ENCODE measurements at regions of chr6 and their contacts with region 1.

Region 1: GRCh38 chr6:130885392-130886192 is 58.4 kb downstream of the SMLR1 start:
- DNase-seq: peak in 4 of 10 donors; percentile 59 to 91 (median 72)
- H3K4me3 ChIP-seq: peak overlapping the region in 1 of 59 donors; percentile 4
- H3K27ac ChIP-seq: peak overlapping the region in 46 of 59 donors; percentile 1 to 95 (median 38)
- H3K27me3 ChIP-seq: no peaks in the 10 kb centered on the region
- CTCF ChIP-seq: peak; percentile 81 to 99 (median 95)

Region 2: DNA sequence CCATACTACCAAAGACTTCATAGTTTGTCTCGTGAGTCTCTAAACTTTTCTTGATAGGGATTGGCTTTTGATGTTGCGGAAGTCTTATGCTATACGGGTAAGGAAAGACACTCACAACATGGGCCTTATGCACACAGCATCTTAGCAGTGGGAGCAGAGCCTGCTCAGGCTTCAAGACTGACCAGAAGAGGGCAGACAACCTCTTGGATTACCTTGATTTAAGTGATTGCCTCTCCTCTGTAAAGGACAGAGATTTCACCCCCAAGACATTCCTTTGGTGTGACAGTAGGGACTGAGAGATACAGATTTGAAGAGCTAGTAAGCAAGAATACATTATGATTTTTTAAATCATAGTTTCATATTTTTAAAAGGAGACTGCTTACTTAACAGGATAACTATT is 591.8 kb before region 1 on chr6:
- intact Hi-C with region 1: no loop called
- DNase-seq: peak in 1 of 10 donors; percentile 28
- H3K4me3 ChIP-seq: no peak overlapping the region
- H3K27ac ChIP-seq: no peak overlapping the region
- H3K27me3 ChIP-seq: peaks cover 0 to 5% (median 0%) of the 10 kb centered on the region in 45 donors
- CTCF ChIP-seq: peak in 43 of 56 donors; percentile 15 to 53 (median 34)

Region 3: DNA sequence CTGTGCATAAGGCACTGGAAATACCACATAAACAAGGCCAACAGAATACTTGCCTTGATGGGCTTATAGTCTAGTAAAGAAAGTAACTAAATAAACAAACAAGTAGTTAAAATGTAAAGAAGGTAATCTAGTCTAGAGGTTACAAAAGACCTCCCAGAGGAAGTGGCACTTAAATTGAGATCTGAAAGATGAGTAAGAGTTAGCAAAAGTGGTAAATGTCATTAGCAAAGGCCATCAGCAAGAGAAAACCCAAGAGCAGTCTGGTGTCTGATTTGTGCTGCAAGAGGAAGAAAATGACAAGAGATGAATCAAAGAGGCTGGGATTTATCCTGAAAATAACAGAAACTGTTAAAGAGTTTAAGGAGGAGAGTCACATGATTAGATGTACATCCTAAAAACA is 155.0 kb before region 1 on chr6:
- intact Hi-C with region 1: no loop called
- DNase-seq: no peak
- H3K4me3 ChIP-seq: no peak overlapping the region
- H3K27ac ChIP-seq: no peak overlapping the region
- H3K27me3 ChIP-seq: no peaks in the 10 kb centered on the region
- CTCF ChIP-seq: no peak

Region 4: GRCh38 chr6:130918171-130918570 is 32.6 kb after region 1 on chr6:
- intact Hi-C with region 1: no loop called
- DNase-seq: no peak
- H3K4me3 ChIP-seq: no peak overlapping the region
- H3K27ac ChIP-seq: no peak overlapping the region
- H3K27me3 ChIP-seq: no peaks in the 10 kb centered on the region
- CTCF ChIP-seq: no peak

Region 5: DNA sequence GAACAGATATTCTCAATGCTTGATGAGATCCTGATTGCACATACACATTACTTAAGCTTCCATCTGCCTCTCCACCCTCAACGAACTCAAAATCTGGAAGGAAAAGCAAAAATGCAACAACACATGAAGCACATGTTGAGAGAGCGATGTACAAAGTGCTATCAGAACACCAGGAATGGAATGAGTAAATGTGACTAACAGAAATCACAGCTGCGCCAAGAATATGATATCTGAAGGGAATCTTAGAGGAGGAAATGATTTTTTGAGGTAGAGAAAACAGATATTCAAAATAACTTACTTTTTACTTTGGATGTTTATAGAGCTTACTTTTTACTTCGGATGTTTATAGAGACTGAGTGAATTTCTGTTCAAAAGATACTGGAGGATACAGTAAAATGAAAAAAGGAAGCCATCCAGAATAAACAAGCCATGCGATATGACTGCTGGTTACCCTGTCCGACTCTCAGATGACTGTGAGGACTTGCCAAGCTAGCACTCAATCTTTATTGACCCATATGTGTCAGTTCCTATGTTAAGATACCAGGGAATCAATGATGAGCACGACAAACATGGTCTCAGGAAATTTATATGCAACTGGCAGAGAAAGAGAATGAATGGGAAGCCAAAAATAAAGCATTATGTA is 43.6 kb after region 1 on chr6:
- intact Hi-C with region 1: loop called in 1 of 2 experiments (anchors 5 kb)
- DNase-seq: no peak
- H3K4me3 ChIP-seq: peak overlapping the region in 3 of 59 donors; percentile 1 to 7 (median 4)
- H3K27ac ChIP-seq: peak overlapping the region in 56 of 59 donors; percentile 30 to 86 (median 70)
- H3K27me3 ChIP-seq: no peaks in the 10 kb centered on the region
- CTCF ChIP-seq: no peak

Region 6: DNA sequence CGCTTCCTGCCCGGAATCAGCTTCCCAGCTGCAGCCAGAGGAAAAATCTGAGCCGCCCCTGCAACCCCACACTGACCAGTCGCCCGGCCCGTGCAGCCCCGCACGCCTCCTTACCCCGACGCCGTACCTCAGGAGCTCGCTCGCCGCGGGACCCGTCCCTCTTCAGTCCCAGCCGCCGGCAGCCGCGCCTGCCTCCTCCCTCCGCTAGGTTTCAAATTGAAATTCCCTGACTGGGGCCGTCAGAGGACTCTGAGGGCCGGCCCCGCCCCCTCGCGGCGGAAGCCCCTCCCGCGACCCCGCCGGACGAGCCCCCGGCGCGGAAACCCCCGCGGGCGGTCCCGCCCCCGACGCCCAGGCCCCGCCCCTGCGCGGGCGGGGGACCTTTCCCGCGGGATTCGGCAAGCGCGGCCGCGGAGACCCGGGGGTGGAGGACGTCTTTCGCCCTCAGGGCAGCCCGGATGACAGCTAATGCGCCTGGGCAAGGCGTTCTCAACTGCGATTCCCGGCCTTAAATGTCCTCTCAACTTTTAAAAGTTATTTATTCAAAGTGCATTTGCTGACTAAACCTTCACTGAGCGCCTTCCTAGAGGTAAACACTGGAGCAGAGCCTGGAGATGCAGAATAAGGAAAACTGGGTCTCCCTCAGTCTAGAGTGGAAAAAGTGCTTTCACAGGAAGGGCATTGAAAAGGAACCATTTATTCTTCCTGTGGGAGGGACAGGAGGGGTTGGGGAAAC is 177.6 kb after region 1 on chr6 and contains the start of gene EPB41L2:
- intact Hi-C with region 1: loop called (anchors 2 kb)
- DNase-seq: peak; percentile 52 to 94 (median 82)
- H3K4me3 ChIP-seq: peak within 1 kb of the TSS; percentile 53 to 99 (median 92)
- H3K27ac ChIP-seq: peak within 1 kb of the TSS; percentile 69 to 96 (median 93)
- H3K27me3 ChIP-seq: no peaks in the 10 kb centered on the region
- CTCF ChIP-seq: peak in 35 of 56 donors; percentile 7 to 63 (median 33)
- total RNA-seq, gene EPB41L2: 223 to 458 (median 339) TPM

Region 7: GRCh38 chr6:131135244-131136020 is 249.8 kb after region 1 on chr6 and contains the start of gene AKAP7:
- intact Hi-C with region 1: loop called in 1 of 2 experiments (anchors 1 kb)
- DNase-seq: peak; percentile 55 to 88 (median 69)
- H3K4me3 ChIP-seq: peak within 1 kb of the TSS; percentile 57 to 90 (median 79)
- H3K27ac ChIP-seq: peak within 1 kb of the TSS; percentile 87 to 99 (median 97)
- H3K27me3 ChIP-seq: no peaks in the 10 kb centered on the region
- CTCF ChIP-seq: peak in 17 of 56 donors; percentile 4 to 44 (median 12)
- total RNA-seq, gene AKAP7: 19.0 to 54.4 (median 33.0) TPM

Region 8: DNA sequence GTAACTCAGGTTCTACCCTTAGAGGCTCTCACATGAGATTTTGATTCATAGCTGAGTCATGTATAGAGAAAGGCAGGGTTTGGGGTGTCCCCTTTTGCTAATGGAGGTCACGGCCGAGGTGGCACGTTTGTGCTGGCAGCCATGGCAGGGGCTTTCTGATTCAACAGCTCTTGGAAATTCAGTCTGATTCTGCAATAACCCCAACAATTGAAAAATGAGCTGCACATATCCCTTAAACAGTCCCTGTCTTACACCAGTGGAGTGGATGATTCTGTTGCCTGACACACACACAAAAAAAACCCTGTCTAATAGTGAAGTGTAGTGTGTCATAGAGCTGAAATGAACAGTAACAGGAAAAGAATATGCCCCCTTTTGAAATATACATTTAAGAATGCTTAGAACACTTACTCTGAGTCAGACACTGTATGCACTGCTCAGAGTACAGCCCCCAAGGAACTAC is 647.0 kb after region 1 on chr6:
- intact Hi-C with region 1: loop called in 1 of 2 experiments (anchors 10 kb)
- DNase-seq: no peak
- H3K4me3 ChIP-seq: no peak overlapping the region
- H3K27ac ChIP-seq: no peak overlapping the region
- H3K27me3 ChIP-seq: peaks cover 0 to 3% (median 0%) of the 10 kb centered on the region in 45 donors
- CTCF ChIP-seq: no peak

Measured in dorsolateral prefrontal cortex (tissue), 120 donors.